ENCODE measurements at regions of chr10 and their contacts with region 1.

Region 1: DNA sequence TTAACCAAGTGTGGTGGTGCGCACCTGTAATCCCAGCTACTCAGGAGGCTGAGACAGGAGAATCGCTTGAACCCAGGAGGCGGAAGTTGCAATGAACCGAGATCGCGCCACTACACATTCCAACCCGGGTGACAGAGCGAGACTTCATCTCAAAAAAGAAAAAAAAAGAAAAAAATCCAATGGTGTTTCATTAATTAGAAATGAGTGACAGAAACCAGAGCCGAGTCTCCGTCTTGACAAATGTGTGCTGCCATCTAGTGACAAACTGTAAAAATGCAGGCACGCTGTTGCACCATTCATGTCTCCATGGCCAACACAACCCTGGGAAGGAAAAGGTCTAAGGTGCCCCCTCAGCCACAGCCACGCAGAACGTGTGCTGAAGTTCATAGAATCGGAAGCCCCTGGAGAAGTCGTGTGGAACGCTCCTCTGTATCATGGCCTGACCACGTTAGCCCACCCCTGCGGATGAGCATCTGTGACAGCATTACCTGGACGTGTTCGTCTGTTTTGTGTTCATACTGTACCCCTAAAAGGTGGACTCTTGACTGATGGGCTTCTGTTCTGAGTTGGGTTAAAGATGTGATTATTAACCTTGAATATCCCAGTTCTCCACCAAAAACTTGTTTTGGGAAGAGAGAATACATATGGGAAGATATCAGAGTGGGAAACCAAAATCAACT is 94.9 kb downstream of the LYZL2 start:
- DNase-seq: peak; percentile 84

Region 2: DNA sequence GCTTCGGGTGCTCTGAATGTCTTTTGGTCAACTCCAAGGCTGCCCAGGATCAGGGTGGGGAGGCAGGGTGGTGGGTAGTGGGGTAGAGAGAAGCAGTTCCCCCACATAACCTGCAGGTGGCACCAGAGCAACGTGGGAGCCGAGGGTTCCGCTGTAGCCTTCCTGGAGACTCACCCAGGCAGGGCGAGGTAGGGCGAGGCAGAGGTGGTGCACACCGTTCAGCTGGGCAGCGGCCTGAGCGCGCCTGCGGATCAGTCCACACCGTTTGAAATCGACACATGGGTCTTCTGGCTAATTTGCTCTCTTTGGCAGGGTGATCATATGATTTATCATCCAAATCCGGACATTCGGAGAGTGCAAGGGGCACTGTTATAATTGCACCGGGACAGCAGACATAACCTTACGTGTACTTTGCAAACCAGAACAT is 142.0 kb before region 1 on chr10:
- intact Hi-C with region 1: loop called in 1 of 2 experiments (anchors 5 kb)
- DNase-seq: peak; percentile 92

Region 3: GRCh38 chr10:30404540-30404939 is 130.1 kb before region 1 on chr10:
- intact Hi-C with region 1: loop called in 1 of 2 experiments (anchors 5 kb)
- DNase-seq: no peak

Region 4: DNA sequence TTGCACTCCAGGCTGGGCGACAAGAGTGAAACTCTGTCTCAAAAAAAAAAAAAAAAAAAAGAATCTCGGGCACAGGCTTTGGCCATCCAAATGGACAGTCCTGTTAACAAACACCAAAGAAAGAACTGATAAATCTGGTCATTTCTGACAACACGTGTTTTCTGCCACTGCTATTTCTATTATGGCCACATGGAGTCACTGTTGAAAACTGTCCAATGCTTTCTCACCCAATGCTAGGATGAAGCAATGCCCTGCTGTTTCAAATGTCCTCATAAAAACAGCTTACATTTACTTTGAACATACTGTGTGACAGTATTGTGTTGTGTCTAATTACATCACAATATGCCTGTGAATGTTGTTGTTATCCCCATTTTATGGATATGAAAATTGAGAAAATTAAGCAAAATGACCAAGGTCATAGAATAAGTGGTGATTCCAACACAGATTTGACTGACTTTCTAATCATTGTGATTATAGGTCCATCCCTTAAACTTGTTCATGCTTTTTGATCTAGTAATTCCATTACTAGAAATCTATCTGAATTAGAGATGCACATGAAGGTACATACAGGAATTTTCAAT is 120.5 kb before region 1 on chr10:
- intact Hi-C with region 1: loop called in 1 of 2 experiments (anchors 5 kb)
- DNase-seq: no peak

Region 5: DNA sequence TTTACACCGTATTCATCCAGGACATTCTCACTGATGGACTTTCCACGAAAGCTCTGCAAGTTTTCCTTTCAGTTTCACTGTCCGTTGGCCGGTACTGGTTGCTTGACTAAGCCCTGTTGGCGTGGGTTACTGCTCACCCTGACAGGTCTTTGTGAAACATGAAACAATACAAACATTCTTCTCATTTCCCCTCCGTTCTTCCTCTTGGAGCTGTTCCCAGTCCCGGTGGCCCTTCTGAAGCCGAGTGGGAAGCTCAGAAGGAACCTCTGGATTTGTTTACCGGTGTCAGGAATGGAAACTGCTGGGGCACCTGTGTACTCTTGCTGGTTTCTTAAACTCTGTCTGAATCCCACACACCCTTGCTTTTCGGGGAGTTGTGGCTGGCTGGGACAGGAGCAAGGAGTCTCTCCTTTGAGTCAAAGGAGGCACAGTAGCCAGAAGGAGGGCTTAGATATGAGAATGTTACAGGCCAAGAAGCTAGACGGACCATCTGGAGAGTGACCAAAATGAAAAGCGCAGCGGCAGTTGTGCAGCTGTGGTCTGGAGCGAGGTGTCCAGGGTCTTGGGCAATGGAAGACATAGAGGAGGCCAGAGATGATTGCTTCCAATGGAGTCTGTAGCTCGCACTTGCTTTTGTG is 49.3 kb after region 1 on chr10:
- intact Hi-C with region 1: loop called in 1 of 2 experiments (anchors 10 kb)
- DNase-seq: peak; percentile 80